ENCODE measurements at regions of chr9 and their contacts with region 1.

Region 1: DNA sequence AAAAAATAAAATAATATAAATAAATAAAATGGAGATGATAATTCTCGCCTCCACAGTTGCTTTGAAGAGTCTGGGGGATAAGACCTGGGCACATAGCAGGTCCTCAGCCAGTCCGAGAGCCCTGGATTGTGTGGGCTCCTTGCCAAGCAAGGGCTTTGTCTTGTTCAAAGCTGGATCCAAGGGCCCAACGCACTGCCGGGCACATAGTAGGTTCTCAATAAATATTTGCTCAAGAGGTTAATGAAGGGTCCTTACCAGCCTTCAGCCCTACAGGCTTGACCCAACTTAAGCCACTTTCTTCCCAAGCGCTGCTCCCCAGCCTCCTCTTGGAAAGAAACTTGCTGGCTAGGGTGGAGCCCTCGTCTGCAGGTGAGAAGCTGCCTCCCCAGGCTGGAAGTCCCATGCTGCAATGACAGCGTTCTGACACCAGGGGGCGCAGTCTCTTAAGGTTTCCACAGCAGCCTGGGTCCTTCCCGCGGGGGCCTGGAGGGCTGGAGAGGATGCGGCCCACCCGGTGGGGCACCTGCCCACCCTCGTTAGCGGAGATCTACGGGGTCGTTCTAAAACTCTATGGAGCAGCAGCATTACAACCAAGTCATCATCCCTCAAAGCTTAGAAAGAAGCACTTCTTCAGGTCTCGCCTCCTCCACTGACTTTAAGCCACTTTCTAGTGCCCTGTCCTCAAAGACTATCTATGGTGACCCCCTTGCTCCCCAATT is 115.2 kb downstream of the LHX2 start:
- DNase-seq: peak; percentile 56 to 92 (median 80)
- ATAC-seq: peak; percentile 79 to 96 (median 86)
- H3K4me3 ChIP-seq: no peak overlapping the region
- H3K27ac ChIP-seq: no peak overlapping the region
- H3K4me1 ChIP-seq: no peaks in the 10 kb centered on the region
- H3K27me3 ChIP-seq: no peaks in the 10 kb centered on the region
- CTCF ChIP-seq: peak; percentile 97 to 99 (median 99)

Region 2: DNA sequence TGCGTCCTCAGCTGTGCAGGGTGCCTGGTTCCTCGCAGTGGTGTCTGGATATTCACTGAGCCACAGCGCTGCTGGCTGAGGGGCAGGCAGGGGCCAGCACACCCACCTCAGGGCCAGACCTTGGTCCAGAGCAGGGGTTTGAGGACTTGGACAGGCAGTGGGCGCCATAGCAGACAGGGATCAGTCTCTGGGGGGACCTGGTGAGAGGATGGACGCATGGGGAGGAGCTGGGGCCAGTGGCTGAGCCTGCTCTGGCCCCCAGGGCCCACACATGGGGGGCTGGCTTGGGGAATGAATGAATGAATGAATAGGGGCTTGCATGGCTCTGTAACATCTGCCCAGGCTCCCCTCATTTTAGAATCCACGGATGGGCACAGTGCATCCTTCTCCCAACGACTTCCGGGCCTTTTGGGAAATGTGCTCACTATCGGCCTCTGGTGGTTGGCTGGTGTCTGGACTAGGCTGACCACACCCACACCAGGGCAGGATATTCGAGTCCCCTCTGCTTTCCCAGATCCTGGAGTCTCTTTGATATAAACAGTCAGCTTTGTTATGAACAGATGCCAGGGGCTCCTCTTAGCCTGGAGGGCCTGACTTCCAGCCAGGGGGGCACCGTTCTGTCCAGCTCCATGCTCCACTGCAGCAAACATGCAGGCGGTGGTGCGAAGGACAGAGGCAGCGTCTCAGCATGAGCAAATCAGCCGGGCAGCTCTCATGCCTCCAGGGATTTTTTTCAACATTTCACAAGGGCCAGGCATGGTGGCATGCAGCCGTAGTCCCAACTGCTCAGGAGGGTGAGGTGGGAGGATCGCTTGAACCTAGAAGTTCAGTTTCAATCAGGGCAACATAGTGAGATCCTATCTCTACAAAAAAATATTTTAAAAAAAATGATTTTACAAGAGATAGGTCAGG is 193.6 kb after region 1 on chr9:
- intact Hi-C with region 1: loop called in 2 of 3 experiments (anchors 5 kb)
- DNase-seq: peak in 5 of 6 donors; percentile 51 to 77 (median 71)
- ATAC-seq: peak; percentile 86 to 92 (median 89)
- H3K4me3 ChIP-seq: no peak overlapping the region
- H3K27ac ChIP-seq: no peak overlapping the region
- H3K4me1 ChIP-seq: no peaks in the 10 kb centered on the region
- H3K27me3 ChIP-seq: no peaks in the 10 kb centered on the region
- CTCF ChIP-seq: peak; percentile 65 to 83 (median 74)

Region 3: GRCh38 chr9:124381170-124381945 is 254.6 kb after region 1 on chr9:
- intact Hi-C with region 1: loop called in 1 of 3 experiments (anchors 10 kb)
- DNase-seq: no peak
- ATAC-seq: no peak
- H3K4me3 ChIP-seq: no peak overlapping the region
- H3K27ac ChIP-seq: no peak overlapping the region
- H3K4me1 ChIP-seq: peaks cover 9 to 22% (median 13%) of the 10 kb centered on the region in 3 donors
- H3K27me3 ChIP-seq: no peaks in the 10 kb centered on the region
- CTCF ChIP-seq: no peak

Measured in pancreas (tissue), 10 donors.